IMR-90 (cell line): ENCODE measurements at regions of chr4 and their contacts with region 1.

Region 1: DNA sequence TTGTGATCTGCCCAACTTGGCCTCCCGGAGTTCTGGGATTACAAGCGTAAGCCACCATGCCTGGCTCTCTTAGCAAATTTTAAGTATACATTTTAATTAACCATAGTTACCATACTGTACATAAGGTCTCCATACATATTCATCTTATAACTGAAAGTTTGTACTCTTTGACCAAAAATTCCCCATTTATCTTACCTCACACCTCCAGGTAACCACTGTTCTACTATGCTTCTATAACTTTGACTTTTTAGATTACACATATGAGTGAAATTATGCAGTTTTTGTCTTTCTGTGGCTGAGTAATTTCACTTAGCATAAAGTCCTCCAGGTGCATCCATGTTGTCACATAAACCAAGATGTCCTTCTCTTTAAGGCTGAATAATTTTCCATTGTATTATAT is 17.4 kb downstream of the C4orf51 start:
- DNase-seq: no peak
- ATAC-seq: no peak
- H3K4me3 ChIP-seq: no peak overlapping the region
- H3K27ac ChIP-seq: no peak overlapping the region
- H3K4me1 ChIP-seq: no peaks in the 10 kb centered on the region
- H3K27me3 ChIP-seq: no peaks in the 10 kb centered on the region
- CTCF ChIP-seq: no peak
- POLR2A ChIP-seq: no peak
- RAD21 ChIP-seq: no peak

Region 2: GRCh38 chr4:145446184-145446583 is 251.1 kb before region 1 on chr4:
- CTCF ChIA-PET with region 1: no interaction called
- POLR2A ChIA-PET with region 1: no interaction called
- dilution Hi-C with region 1: no loop called
- in situ Hi-C with region 1: no loop called
- intact Hi-C with region 1: no loop called
- DNase-seq: no peak
- ATAC-seq: no peak
- H3K4me3 ChIP-seq: no peak overlapping the region
- H3K27ac ChIP-seq: no peak overlapping the region
- H3K4me1 ChIP-seq: no peaks in the 10 kb centered on the region
- H3K27me3 ChIP-seq: no peaks in the 10 kb centered on the region
- CTCF ChIP-seq: no peak
- POLR2A ChIP-seq: no peak
- RAD21 ChIP-seq: no peak

Region 3: DNA sequence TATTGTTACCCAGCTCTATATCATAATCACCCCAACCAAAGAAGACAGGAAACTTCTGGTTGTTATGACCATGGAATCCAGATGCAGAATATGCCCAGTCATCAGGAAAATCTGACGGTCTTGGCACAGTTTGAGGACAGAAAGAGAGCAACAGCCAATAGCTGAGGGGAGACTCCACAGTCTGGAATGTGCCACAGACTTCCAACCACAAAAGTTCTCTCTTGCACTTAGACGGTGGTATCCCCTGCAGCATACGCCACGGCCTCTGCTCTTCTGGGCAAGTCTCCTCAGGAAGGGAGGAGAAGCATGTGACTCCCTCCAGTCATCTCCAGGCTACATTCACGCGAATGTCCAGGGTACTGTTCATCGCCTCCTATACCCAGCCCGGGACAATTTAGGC is 222.9 kb after region 1 on chr4:
- CTCF ChIA-PET with region 1: no interaction called
- POLR2A ChIA-PET with region 1: interaction called, 11 read pairs
- dilution Hi-C with region 1: no loop called
- in situ Hi-C with region 1: no loop called
- intact Hi-C with region 1: no loop called
- DNase-seq: peak; percentile 93
- ATAC-seq: peak; percentile 98
- H3K4me3 ChIP-seq: no peak overlapping the region
- H3K27ac ChIP-seq: peak overlapping the region; percentile 45; the same call in 1 of the 2 replicates
- H3K4me1 ChIP-seq: peaks cover 4% of the 10 kb centered on the region
- H3K27me3 ChIP-seq: no peaks in the 10 kb centered on the region
- CTCF ChIP-seq: no peak
- POLR2A ChIP-seq: no peak
- RAD21 ChIP-seq: no peak